ENCODE measurements at regions of chr1 and their contacts with region 1.

Region 1: DNA sequence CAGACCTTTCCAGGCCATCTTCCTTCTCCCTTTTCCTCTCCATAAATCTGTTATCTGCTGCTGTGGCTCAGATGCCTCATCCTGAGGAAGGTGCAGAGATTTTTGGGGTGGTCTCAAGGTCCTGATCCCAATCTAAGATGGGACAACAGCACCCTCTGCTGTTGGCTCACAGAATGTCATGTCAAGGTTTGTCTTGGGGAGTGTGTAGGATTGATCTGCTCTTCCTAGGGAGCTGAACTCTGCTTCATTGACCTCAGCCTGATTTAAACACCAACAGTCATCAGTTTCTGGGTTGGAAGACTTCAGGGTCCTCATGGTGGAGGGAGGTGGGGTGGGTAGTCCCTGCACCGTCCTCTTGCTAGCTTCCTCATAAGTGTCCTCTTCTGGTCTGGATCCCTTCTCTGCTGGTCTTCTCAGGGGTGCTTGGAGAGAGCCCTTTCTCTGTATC is 62.8 kb upstream of the LAX1 start:
- DNase-seq: peak; percentile 62 to 87
- ATAC-seq: peak; percentile 61 to 84 (median 82)
- H3K4me3 ChIP-seq: no peak overlapping the region
- H3K4me3 Mint-ChIP-seq: no peak overlapping the region
- H3K27ac ChIP-seq: peak overlapping the region; percentile 25
- H3K27ac Mint-ChIP-seq: peak overlapping the region; percentile 71 to 84
- H3K4me1 ChIP-seq: peaks cover 3% of the 10 kb centered on the region
- H3K4me1 Mint-ChIP-seq: peaks cover 15 to 21% of the 10 kb centered on the region in 2 donors
- H3K27me3 ChIP-seq: no peaks in the 10 kb centered on the region
- H3K27me3 Mint-ChIP-seq: no peaks in the 10 kb centered on the region
- CTCF ChIP-seq: peak; percentile 93

Region 2: DNA sequence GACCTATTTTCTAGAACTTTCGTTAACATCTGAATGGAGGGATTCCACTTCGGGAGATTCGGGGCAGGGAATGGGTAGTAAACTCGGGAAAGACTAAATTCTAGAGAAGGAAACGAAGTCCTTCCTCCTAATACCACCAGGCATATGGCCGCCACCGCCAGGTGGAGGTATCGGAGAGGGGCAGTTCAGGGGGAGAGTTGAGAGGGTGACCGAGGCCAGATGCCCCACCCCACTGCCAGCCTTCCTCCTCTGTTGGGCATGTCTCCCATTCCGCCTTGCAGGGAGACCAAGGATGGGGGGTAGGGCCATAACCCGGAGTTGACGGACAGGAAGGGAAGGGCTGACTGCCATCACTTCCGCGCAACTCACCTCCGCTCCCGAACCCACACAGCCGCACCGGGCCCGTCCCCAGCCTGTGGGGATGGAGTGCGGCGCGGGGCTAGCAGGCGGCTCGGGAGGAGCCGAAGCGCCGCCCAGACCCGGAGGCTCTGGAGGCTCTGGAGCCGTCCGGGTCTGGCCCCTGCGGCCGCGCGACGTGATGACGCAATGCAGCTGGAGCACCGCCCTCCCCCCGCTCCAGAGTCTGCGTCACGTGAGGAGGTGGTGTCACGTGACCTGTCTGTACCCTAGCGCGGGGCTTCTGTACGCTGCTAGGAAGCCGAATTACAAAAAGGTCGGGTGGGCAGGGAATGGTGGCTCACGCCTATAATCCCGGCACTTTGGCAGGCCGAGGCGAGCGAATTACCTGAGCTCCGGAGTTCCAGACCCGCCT is 775.2 kb before region 1 on chr1 and contains the start of gene KLHL12:
- intact Hi-C with region 1: no loop called
- DNase-seq: peak; percentile 95 to 97
- ATAC-seq: peak; percentile 94 to 98 (median 95)
- H3K4me3 ChIP-seq: peak within 1 kb of the TSS; percentile 98
- H3K4me3 Mint-ChIP-seq: peak within 1 kb of the TSS; percentile 97
- H3K27ac ChIP-seq: peak within 1 kb of the TSS; percentile 93
- H3K27ac Mint-ChIP-seq: peak within 1 kb of the TSS; percentile 91 to 97
- H3K4me1 ChIP-seq: peaks cover 13% of the 10 kb centered on the region
- H3K4me1 Mint-ChIP-seq: peaks cover 19 to 22% of the 10 kb centered on the region in 2 donors
- H3K27me3 ChIP-seq: no peaks in the 10 kb centered on the region
- H3K27me3 Mint-ChIP-seq: peaks cover 2 to 6% of the 10 kb centered on the region in 2 donors
- CTCF ChIP-seq: peak; percentile 59
- total RNA-seq, gene KLHL12: 19.2 to 23.2 (median 22.6) TPM

Region 3: DNA sequence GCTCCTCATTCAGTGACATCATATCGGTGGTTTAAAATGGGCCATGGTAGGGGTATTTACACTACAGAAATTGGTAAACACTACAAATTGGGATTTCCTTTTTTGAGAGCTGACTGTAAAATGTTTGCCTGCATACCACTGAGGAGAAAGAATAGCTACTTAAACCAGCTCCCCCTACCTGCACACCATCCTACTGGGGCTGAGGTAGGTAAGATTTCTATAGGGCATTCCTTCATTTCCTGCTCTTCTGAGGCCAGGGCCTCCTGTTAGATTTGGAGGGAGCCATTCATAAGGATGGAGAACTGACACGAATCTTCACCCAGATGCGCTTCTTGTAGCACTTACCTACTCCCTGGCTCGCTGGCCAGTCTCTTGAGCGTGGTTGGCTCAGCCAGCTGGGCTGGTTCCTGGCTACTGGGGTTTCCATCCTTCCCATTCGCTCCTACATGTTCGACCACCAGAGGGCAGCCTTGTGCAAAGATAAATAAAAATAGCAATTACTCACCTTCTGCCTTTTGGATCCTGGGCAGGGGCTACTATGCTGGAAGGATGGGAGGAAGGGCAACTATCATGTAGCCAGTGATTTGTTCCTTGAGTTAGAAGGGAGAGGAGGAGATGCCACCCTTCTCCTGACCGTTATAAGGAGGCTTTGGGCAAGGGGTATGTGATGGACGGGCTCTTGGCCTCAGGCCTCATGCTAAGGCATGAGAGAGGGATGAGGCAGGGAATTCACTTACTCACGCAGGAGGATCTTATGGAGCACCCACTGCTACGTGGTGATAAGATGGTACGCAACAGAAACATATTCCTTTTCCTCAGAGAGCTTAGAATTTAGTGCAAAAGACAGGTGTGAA is 197.5 kb before region 1 on chr1:
- intact Hi-C with region 1: loop called (anchors 1 kb)
- DNase-seq: peak; percentile 71 to 88
- ATAC-seq: peak; percentile 76 to 87 (median 84)
- H3K4me3 ChIP-seq: no peak overlapping the region
- H3K4me3 Mint-ChIP-seq: no peak overlapping the region
- H3K27ac ChIP-seq: no peak overlapping the region
- H3K27ac Mint-ChIP-seq: no peak overlapping the region
- H3K4me1 ChIP-seq: peaks cover 3% of the 10 kb centered on the region
- H3K4me1 Mint-ChIP-seq: peaks cover 0 to 4% of the 10 kb centered on the region in 2 donors
- H3K27me3 ChIP-seq: no peaks in the 10 kb centered on the region
- H3K27me3 Mint-ChIP-seq: peaks cover 0 to 7% of the 10 kb centered on the region in 2 donors
- CTCF ChIP-seq: peak; percentile 75

Region 4: DNA sequence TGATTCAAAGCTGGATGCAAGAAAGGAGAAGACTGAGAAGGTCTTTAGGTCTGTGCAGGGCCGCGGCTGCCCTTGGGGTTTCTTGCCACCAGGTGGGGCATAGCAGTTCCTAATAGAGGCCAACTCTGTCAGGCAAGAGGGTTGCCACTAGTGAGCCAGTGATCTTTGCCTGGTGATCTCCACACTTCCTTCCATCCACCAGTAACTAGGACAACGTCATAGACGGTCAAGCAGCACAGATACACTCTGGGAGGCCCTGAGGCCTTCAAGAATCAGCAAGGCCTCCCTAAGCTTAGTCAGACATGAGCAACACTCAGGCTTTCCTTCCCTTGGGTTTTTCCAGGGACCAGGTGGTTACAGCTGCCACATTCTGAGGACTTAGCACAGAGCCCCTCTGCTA is 108.4 kb before region 1 on chr1:
- intact Hi-C with region 1: loop called (anchors 1 kb)
- DNase-seq: peak; percentile 42 to 71
- ATAC-seq: peak; percentile 79 to 94 (median 91)
- H3K4me3 ChIP-seq: no peak overlapping the region
- H3K4me3 Mint-ChIP-seq: no peak overlapping the region
- H3K27ac ChIP-seq: no peak overlapping the region
- H3K27ac Mint-ChIP-seq: peak overlapping the region in 1 of 2 donors; percentile 48
- H3K4me1 ChIP-seq: peaks cover 5% of the 10 kb centered on the region
- H3K4me1 Mint-ChIP-seq: peaks cover 0 to 13% of the 10 kb centered on the region in 2 donors
- H3K27me3 ChIP-seq: no peaks in the 10 kb centered on the region
- H3K27me3 Mint-ChIP-seq: peaks cover 0 to 7% of the 10 kb centered on the region in 2 donors
- CTCF ChIP-seq: peak; percentile 46

Region 5: GRCh38 chr1:203609979-203610493 is 92.1 kb before region 1 on chr1:
- intact Hi-C with region 1: loop called (anchors 5 kb)
- DNase-seq: no peak
- ATAC-seq: no peak
- H3K4me3 ChIP-seq: no peak overlapping the region
- H3K4me3 Mint-ChIP-seq: no peak overlapping the region
- H3K27ac ChIP-seq: no peak overlapping the region
- H3K27ac Mint-ChIP-seq: no peak overlapping the region
- H3K4me1 ChIP-seq: peaks cover 34% of the 10 kb centered on the region
- H3K4me1 Mint-ChIP-seq: peaks cover 20 to 50% of the 10 kb centered on the region in 2 donors
- H3K27me3 ChIP-seq: no peaks in the 10 kb centered on the region
- H3K27me3 Mint-ChIP-seq: no peaks in the 10 kb centered on the region
- CTCF ChIP-seq: no peak